HEK293 (cell line): ENCODE measurements at regions of chr2 and their contacts with region 1.

Region 1: DNA sequence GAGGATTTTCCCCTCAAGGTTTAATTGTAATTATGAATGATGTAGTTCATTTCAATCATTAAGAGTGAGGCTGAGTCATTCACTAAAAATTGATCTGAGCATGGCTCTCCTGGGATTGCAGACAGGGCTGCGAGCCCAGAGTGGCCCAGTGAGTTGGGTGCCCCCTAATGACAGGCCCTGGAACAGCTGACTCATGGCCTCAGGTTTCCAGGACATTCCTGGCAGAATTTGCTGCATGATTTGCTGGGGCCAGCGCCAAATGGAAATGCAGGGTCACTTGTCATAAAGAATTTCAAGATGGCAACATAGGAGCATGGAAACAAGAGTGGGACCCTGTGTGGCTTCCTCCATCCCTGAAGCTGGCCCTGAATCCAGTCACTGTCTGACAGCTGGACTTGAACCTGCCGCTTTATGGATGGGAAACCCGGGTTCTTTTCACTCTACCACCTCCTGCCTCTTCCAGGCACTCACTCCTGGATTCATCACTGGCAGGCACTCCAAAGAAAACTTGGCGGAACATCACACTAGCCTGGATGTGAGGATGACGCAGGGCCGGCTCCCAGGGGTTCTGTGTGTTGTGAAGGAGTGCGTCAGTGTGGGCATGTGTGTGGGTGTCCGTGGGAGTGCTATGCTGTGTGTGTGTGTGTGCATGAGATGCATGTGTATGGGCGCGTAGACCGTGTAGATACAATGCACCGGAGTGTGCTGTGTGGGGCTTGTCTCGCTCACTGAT is 15.2 kb downstream of the OTOF start:
- H3K4me3 ChIP-seq: no peak overlapping the region
- H3K27ac ChIP-seq: no peak overlapping the region
- H3K4me1 ChIP-seq: no peaks in the 10 kb centered on the region
- CTCF ChIP-seq: peak; percentile 43

Region 2: DNA sequence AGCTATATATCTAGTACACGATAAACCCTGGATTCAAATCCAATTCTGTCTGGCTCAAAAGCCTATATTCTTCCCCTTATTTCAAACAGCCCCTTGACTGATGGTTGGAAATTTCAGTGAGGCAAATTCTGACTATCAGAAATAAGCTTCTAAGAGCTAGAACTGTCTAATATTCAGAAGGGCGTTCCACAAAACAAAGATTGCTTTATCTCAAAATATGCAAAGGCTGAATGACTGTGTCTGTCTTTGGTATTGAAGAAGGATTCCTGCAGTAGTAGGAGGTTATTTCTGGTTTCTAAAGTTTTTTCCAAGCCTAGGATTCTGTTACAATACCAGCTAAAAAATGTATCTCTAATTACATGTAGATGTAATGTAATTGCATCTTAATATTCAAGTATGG is 29.8 kb before region 1 on chr2:
- CTCF ChIA-PET with region 1: interaction called, 10 read pairs
- POLR2A ChIA-PET with region 1: no interaction called
- H3K4me3 ChIP-seq: no peak overlapping the region
- H3K27ac ChIP-seq: no peak overlapping the region
- H3K4me1 ChIP-seq: peaks cover 6% of the 10 kb centered on the region
- CTCF ChIP-seq: no peak